ENCODE measurements at regions of chr1 and their contacts with region 1.

Region 1: DNA sequence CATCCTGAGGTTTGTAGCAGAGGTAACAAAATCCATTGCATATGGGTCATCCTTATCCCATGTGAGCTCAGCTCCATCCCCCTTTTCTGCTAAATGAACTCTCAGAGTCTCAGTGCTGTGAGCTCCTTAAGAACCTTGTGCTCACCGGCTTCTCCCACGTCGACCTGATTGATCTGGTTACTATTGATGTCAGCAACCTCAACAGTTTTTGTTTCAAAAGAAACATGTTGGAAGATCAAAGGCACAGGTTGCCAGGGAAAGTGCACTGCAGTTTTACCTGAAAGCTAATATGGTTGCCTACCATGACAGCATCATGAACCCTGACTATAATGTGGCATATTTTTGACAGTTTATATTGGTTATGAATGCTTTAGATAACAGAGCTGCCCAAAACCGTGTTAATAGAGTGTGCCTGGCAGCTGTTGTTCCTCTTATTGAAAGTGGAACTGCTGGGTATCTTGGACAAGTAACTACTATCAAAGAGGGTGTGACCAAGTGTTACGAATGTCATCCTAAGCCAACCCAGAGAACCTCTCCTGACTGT is 131.4 kb downstream of the HS2ST1 start:
- DNase-seq: peak; percentile 9
- CTCF ChIP-seq: no peak

Region 2: GRCh38 chr1:87058343-87058649 is 12.5 kb after region 1 on chr1:
- CTCF ChIA-PET with region 1: interaction called, 13 read pairs
- POLR2A ChIA-PET with region 1: interaction called, 10 read pairs
- DNase-seq: no peak
- CTCF ChIP-seq: no peak